ENCODE measurements at regions of chr4 and their contacts with region 1.

Region 1: GRCh38 chr4:88211473-88212252 is 53.2 kb upstream of the ABCG2 start:
- DNase-seq: peak; percentile 47
- H3K4me3 ChIP-seq: no peak overlapping the region
- H3K27ac ChIP-seq: no peak overlapping the region
- H3K4me1 ChIP-seq: no peaks in the 10 kb centered on the region
- H3K27me3 ChIP-seq: no peaks in the 10 kb centered on the region
- CTCF ChIP-seq: peak in 3 of 4 experiments; percentile 77 to 84 (median 78)
- POLR2A ChIP-seq: no peak

Region 2: GRCh38 chr4:87853108-87853507 is 358.6 kb before region 1 on chr4:
- intact Hi-C with region 1: loop called (anchors 5 kb)
- DNase-seq: no peak
- H3K4me3 ChIP-seq: no peak overlapping the region
- H3K27ac ChIP-seq: no peak overlapping the region
- H3K4me1 ChIP-seq: no peaks in the 10 kb centered on the region
- H3K27me3 ChIP-seq: no peaks in the 10 kb centered on the region
- CTCF ChIP-seq: peak in 3 of 4 experiments; percentile 49 to 58 (median 56)
- POLR2A ChIP-seq: no peak

Region 3: GRCh38 chr4:88033309-88033708 is 178.4 kb before region 1 on chr4:
- intact Hi-C with region 1: loop called (anchors 5 kb)
- DNase-seq: peak; percentile 48
- H3K4me3 ChIP-seq: no peak overlapping the region
- H3K27ac ChIP-seq: no peak overlapping the region
- H3K4me1 ChIP-seq: no peaks in the 10 kb centered on the region
- H3K27me3 ChIP-seq: no peaks in the 10 kb centered on the region
- CTCF ChIP-seq: peak in 3 of 4 experiments; percentile 52 to 74 (median 72)
- POLR2A ChIP-seq: no peak

Region 4: DNA sequence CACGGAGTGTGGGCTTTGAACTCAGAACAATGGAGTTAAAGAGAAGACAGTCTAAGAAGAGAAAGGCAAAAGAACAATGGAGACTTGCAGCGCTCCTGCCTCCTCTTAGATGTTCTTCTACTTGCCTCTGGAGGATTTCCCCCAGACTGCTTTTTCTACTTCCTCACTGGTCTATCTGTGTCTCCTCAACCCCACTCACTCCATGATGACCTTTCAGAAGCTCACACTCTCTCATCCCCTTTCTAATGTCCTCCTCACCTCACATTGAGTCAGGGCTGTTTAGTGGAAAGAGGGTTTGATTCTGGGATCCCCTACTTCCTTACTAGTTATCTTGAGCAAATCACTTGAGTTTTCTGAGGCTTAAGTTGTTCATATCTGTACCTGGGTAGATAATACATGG is 154.8 kb after region 1 on chr4:
- intact Hi-C with region 1: loop called (anchors 5 kb)
- DNase-seq: no peak
- H3K4me3 ChIP-seq: no peak overlapping the region
- H3K27ac ChIP-seq: no peak overlapping the region
- H3K4me1 ChIP-seq: no peaks in the 10 kb centered on the region
- H3K27me3 ChIP-seq: no peaks in the 10 kb centered on the region
- CTCF ChIP-seq: no peak
- POLR2A ChIP-seq: no peak

Region 5: DNA sequence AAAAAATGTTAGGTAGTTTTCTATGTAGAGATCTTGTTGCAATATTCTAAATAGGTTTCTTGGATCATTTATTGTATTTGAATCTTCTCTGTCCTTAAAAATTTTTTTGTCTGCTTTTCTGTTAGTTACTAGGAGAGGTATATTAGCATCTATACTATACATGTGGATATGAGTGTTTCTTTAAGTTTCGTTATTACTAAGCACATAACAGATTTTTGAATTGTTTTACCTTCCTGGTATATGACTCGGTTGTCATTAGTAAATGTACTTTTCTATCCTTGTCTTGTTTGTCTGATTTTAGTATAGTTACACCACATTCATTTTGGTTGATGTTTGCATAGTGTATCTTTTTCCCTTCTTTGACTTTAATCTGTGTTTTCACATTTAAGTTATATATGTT is 291.7 kb after region 1 on chr4:
- intact Hi-C with region 1: no loop called
- DNase-seq: no peak
- H3K4me3 ChIP-seq: no peak overlapping the region
- H3K27ac ChIP-seq: no peak overlapping the region
- H3K4me1 ChIP-seq: no peaks in the 10 kb centered on the region
- H3K27me3 ChIP-seq: no peaks in the 10 kb centered on the region
- CTCF ChIP-seq: no peak
- POLR2A ChIP-seq: no peak

Measured in prostate gland (tissue), 2 donors.